ENCODE measurements at regions of chr7 and their contacts with region 1.

Region 1: DNA sequence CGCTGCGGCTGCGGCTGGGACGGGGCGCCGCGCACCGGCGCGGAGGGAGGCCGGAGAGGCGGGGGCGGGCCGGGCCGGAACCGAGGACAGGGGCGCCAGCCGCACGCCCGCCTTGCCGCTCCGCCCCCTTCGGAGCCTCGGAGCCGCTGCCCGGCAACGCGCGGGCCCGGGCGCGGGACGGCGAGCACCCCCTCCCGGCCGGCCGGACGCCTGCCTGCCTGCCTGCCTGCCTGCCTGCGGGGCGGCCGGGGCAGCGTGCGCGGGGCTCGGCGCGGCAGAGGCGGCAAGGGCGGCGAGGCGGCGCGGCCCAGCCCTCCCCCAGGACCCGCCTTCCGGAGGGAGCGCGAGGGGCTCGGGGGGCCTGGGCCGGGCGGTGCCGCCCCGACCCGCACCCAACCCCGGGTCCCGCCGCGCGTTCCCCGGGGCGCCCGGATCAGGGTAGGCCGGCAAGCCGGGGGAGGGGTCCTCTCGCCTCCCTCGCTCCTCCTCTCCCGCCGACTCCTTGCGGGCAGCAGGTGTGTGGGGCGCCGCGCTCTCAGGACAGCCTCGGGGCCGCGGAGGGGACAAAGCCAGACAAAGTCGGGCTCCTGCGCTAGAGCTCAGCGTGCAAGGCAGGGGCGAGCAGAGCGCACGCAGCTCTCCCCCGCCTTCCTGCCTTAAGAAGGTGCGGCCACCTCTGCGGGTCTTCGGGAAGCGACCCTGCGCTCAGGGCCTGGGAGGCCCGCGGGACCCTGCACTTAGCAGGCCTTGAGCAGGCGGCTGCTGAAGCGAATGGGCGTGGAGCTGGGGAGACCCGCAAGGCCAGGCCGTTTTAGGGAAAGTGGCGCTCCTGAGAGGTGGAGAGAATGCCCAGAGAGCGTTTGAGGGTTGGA is at the start of gene KIAA1549:
- DNase-seq: peak; percentile 77
- ATAC-seq: peak; percentile 79
- H3K4me3 ChIP-seq: peak within 1 kb of the TSS; percentile 90
- H3K27ac ChIP-seq: peak within 1 kb of the TSS; percentile 40
- H3K4me1 ChIP-seq: peaks cover 22% of the 10 kb centered on the region
- H3K27me3 ChIP-seq: no peaks in the 10 kb centered on the region
- CTCF ChIP-seq: no peak
- total RNA-seq, gene KIAA1549: 7.5 and 8.2 TPM in 2 replicates

Region 2: DNA sequence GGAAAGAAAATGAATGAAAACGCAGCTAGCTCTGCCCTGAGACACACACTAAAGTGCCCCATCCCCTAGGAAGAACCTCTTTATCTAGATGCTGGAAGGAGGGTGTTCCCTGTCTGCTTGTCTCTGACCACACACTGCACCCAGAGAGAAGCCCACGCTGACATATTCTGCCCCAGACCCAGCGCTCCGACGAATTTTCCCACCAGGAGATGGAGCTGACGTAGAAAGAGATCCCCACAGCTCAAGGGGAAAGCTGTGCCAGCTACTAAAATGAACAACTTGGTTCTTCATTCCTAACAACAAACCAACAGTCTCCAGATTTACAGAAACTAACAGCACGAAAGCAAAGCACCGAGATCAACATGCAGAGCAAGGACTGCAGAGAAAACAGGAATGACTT is 73.7 kb before region 1 on chr7:
- CTCF ChIA-PET with region 1: no interaction called
- POLR2A ChIA-PET with region 1: no interaction called
- intact Hi-C with region 1: no loop called
- DNase-seq: no peak
- ATAC-seq: no peak
- H3K4me3 ChIP-seq: no peak overlapping the region
- H3K27ac ChIP-seq: no peak overlapping the region
- H3K4me1 ChIP-seq: no peaks in the 10 kb centered on the region
- H3K27me3 ChIP-seq: no peaks in the 10 kb centered on the region
- CTCF ChIP-seq: no peak

Region 3: GRCh38 chr7:138935465-138936011 is 46.0 kb before region 1 on chr7:
- CTCF ChIA-PET with region 1: interaction called, 5 read pairs
- POLR2A ChIA-PET with region 1: no interaction called
- intact Hi-C with region 1: loop called (anchors 1 kb)
- DNase-seq: peak; percentile 92
- ATAC-seq: peak; percentile 93
- H3K4me3 ChIP-seq: peak overlapping the region; percentile 49; the same call in 1 of the 2 replicates
- H3K27ac ChIP-seq: peak overlapping the region; percentile 91
- H3K4me1 ChIP-seq: peaks cover 32% of the 10 kb centered on the region
- H3K27me3 ChIP-seq: no peaks in the 10 kb centered on the region
- CTCF ChIP-seq: no peak

Region 4: GRCh38 chr7:138957753-138958648 is 23.6 kb before region 1 on chr7:
- CTCF ChIA-PET with region 1: no interaction called
- POLR2A ChIA-PET with region 1: interaction called, 3 read pairs
- intact Hi-C with region 1: loop called (anchors 2 kb)
- DNase-seq: no peak
- ATAC-seq: no peak
- H3K4me3 ChIP-seq: no peak overlapping the region
- H3K27ac ChIP-seq: peak overlapping the region; percentile 76
- H3K4me1 ChIP-seq: peaks cover 21% of the 10 kb centered on the region
- H3K27me3 ChIP-seq: no peaks in the 10 kb centered on the region
- CTCF ChIP-seq: no peak

Measured in PC-3 (cell line).